Cardiac septum (tissue), 1 donor: ENCODE measurements at regions of chr4 and their contacts with region 1.

Region 1: GRCh38 chr4:110516106-110516922 is 40.4 kb downstream of the ENPEP start:
- DNase-seq: no peak

Region 2: GRCh38 chr4:109998867-109999584 is 517.3 kb before region 1 on chr4:
- intact Hi-C with region 1: loop called (anchors 2 kb)
- DNase-seq: no peak

Region 3: DNA sequence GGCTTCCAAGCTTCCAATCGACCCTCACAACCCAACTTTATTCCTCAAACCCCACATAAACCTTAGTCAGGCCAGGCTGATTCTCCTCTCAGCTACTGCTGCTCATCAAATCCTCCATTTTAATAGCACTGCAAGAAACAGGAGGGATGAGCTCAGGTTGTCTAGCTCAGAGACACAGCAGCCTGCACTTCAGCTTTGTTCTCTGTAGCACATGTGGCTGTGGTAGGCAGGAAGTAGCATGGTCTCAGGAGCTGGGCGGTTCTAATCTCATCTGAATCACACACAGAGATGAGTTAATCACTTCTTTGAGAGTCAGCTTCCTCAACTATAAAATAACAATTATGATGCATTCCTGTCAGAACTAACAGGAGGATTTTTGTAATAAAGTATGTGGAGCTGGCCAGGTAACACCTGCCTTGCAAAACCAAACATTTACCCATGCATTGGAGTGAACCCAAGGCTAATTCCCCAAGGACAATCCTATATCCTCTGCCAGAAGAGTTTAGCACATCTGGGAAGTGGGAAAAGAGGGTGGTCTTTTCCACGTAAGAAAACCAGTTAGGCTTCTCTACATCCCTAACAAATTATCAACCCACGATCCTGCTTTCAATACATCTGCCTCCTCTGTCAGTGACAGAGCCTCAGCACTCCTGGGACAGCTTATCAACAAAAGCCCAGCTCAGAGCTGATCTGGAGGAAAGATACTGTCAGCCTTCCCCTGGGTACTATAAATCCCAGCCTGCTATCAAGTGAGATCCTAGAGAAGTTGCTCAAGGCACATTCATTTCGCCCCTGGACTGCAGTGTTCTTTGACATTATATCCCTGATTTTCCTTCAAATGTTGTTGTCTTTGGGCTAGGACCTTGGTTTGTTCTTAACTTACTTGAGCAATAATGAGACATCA is 350.7 kb before region 1 on chr4:
- intact Hi-C with region 1: no loop called
- DNase-seq: no peak

Region 4: DNA sequence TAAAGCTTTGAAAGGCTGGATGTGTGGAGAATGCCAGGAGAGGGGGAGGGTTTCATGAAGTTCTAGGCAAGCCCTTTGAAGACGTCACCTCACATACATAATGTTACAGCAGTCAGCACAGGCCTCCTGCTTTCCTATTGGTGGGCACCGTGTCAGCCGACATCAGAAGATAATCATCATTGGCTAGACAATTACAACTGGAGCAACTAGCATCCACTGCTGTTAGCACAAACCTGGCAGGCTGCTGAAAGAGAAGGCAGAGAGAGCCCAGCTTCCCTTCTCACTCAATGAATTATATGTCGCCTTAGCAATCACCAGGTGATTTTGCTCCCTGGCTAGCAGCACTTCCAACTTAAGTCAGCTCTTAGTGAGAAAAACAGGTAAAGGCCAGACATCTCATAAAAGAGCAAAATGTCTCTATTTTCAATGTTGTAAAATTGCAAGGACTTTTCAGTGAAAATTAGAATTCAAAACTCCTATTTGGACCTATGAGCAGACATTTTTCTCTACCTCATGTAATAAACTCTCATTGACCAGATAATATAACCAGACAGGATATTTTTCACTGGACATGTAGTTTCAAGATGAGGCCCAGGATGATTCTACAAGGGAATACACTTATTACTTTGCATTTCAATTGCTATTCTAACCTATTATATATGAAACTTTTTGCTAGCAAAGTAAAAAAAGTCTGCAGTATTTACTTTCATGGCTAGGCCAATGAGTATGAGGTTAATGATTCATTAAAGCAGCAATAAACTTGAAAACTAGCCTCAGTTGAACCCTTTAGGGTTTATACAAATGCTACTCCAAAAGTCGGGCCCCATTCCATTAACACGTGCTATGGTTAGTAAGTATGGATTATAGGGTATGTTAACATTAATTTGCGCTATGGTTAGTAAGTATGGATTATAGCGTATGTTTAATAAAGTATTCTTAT is 322.2 kb before region 1 on chr4:
- intact Hi-C with region 1: loop called (anchors 10 kb)
- DNase-seq: no peak

Region 5: GRCh38 chr4:110344162-110344561 is 172.2 kb before region 1 on chr4:
- intact Hi-C with region 1: loop called (anchors 10 kb)
- DNase-seq: no peak